ENCODE measurements at regions of chr17 and their contacts with region 1.

Region 1: DNA sequence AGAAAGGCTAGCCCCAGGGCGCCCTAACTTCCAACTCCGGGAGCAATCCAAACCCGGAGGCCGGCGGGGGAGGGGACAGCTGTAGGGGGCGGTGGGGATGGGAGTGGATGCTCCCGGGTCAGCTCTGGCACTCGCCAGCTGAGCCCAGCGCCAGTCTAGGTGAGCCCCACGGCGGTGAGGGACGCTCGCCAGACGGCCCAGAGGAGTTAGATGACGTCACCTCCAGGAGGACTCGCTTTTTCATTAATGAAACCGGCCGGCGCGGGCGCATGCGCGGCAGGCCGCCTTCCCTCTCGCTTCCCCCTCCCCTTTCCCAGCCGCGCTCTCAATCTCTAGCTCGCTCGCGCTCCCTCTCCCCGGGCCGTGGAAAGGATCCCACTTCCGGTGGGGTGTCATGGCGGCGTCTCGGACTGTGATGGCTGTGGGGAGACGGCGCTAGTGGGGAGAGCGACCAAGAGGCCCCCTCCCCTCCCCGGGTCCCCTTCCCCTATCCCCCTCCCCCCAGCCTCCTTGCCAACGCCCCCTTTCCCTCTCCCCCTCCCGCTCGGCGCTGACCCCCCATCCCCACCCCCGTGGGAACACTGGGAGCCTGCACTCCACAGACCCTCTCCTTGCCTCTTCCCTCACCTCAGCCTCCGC is at the start of gene NF1:
- DNase-seq: peak; percentile 92 to 97 (median 94)
- H3K4me3 ChIP-seq: peak within 1 kb of the TSS; percentile 72 to 98 (median 87)
- H3K4me3 Mint-ChIP-seq: peak within 1 kb of the TSS; percentile 96 to 97
- H3K27ac ChIP-seq: peak within 1 kb of the TSS; percentile 52 to 82
- H3K27ac Mint-ChIP-seq: peak within 1 kb of the TSS; percentile 80 to 92 (median 89)
- H3K4me1 ChIP-seq: peaks cover 13 to 17% of the 10 kb centered on the region in 2 donors
- H3K4me1 Mint-ChIP-seq: peaks cover 17% of the 10 kb centered on the region
- H3K27me3 ChIP-seq: no peaks in the 10 kb centered on the region
- H3K27me3 Mint-ChIP-seq: peaks cover 0 to 2% (median 0%) of the 10 kb centered on the region in 3 donors
- CTCF ChIP-seq: no peak
- polyA plus RNA-seq, gene NF1: 1.2 to 7.4 (median 2.1) TPM

Region 2: DNA sequence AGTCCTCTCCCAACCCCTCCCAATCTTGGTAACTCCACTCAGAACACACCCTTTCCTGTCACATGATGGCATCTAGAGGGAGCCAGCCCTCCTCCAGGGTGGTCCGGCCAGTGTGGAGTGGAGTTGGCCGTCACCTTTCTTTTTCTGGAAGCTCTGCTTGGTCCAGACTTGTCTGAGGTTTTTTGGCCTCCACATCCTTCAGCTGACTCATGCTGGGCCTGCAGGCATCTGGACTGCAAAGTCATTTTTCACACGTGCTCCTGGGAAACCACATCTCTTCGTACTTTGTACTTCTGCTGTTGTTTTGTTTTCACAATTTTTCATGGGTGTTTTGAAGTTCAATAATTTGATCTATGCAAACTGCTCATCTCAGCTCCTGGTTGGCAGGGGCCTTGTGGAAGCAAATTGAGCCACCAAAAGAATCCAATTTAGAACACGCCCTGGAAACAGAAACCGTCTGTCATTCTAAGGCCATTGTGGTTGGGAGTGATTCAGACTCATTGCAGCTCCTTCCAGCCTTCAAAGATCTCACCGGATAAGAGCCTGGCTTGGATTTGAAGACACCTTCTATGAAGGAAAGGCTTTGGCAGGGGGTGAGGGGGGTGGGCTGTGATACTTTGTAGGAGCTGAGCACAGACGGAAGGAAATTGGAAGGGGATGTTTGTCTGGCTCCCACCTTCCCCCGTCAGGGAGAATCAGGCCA is 42.4 kb before region 1 on chr17:
- intact Hi-C with region 1: loop called in 1 of 2 experiments (anchors 5 kb)
- DNase-seq: peak; percentile 67 to 82 (median 67)
- H3K4me3 ChIP-seq: peak overlapping the region in 1 of 3 experiments; percentile 29
- H3K4me3 Mint-ChIP-seq: peak overlapping the region; percentile 28 to 76
- H3K27ac ChIP-seq: peak overlapping the region; percentile 73 to 92
- H3K27ac Mint-ChIP-seq: peak overlapping the region; percentile 92 to 98 (median 96)
- H3K4me1 ChIP-seq: peaks cover 32 to 33% of the 10 kb centered on the region in 2 donors
- H3K4me1 Mint-ChIP-seq: peaks cover 31% of the 10 kb centered on the region
- H3K27me3 ChIP-seq: no peaks in the 10 kb centered on the region
- H3K27me3 Mint-ChIP-seq: no peaks in the 10 kb centered on the region
- CTCF ChIP-seq: no peak

Region 3: DNA sequence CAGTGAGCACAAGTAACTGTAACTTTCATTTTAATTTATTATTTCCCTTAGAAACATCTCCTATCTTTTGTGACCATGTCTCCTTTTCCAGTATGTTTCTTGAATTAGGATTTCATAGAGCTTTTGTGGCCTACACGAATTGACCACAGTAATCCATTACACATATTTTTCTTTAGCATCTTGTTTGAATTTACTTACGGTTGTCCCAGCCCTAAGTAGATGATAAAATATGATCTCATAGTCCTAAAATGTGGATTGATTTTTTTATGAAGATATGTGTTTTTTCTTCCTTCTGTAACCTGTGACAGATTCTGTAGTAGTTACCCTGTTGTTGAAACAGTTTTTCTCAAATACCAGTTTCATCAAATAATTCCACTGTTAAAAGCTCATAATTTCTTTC is 61.6 kb after region 1 on chr17:
- intact Hi-C with region 1: no loop called
- DNase-seq: no peak
- H3K4me3 ChIP-seq: no peak overlapping the region
- H3K4me3 Mint-ChIP-seq: no peak overlapping the region
- H3K27ac ChIP-seq: no peak overlapping the region
- H3K27ac Mint-ChIP-seq: no peak overlapping the region
- H3K4me1 ChIP-seq: no peaks in the 10 kb centered on the region
- H3K4me1 Mint-ChIP-seq: peaks cover 8% of the 10 kb centered on the region
- H3K27me3 ChIP-seq: no peaks in the 10 kb centered on the region
- H3K27me3 Mint-ChIP-seq: peaks cover 0 to 2% (median 0%) of the 10 kb centered on the region in 3 donors
- CTCF ChIP-seq: no peak